SK-N-SH (cell line): ENCODE measurements at regions of chr7 and their contacts with region 1.

Region 1: GRCh38 chr7:159030490-159031134 is 114.1 kb downstream of the VIPR2 start:
- DNase-seq: peak; percentile 97
- H3K4me3 ChIP-seq: peak overlapping the region; percentile 16 to 42; a peak in 3 of 4 replicates
- H3K27ac ChIP-seq: no peak overlapping the region; a peak in 1 of 4 replicates
- H3K4me1 ChIP-seq: peaks cover 0 to 11% of the 10 kb centered on the region in 2 experiments; a peak in 1 of 4 replicates
- H3K27me3 ChIP-seq: no peaks in the 10 kb centered on the region
- CTCF ChIP-seq: no peak
- EP300 ChIP-seq: no peak
- RAD21 ChIP-seq: peak; percentile 24

Region 2: GRCh38 chr7:158186864-158187693 is 843.5 kb before region 1 on chr7:
- CTCF ChIA-PET with region 1: no interaction called
- POLR2A ChIA-PET with region 1: no interaction called
- DNase-seq: no peak
- H3K4me3 ChIP-seq: no peak overlapping the region
- H3K27ac ChIP-seq: no peak overlapping the region
- H3K4me1 ChIP-seq: no peaks in the 10 kb centered on the region
- H3K27me3 ChIP-seq: no peaks in the 10 kb centered on the region
- CTCF ChIP-seq: no peak
- EP300 ChIP-seq: no peak
- RAD21 ChIP-seq: no peak

Region 3: GRCh38 chr7:159049266-159050025 is 18.8 kb after region 1 on chr7:
- CTCF ChIA-PET with region 1: interaction called, 13 read pairs
- POLR2A ChIA-PET with region 1: no interaction called
- DNase-seq: no peak
- H3K4me3 ChIP-seq: no peak overlapping the region
- H3K27ac ChIP-seq: no peak overlapping the region
- H3K4me1 ChIP-seq: no peaks in the 10 kb centered on the region
- H3K27me3 ChIP-seq: no peaks in the 10 kb centered on the region
- CTCF ChIP-seq: no peak
- EP300 ChIP-seq: no peak
- RAD21 ChIP-seq: no peak